ENCODE measurements at regions of chr3 and their contacts with region 1.

Region 1: DNA sequence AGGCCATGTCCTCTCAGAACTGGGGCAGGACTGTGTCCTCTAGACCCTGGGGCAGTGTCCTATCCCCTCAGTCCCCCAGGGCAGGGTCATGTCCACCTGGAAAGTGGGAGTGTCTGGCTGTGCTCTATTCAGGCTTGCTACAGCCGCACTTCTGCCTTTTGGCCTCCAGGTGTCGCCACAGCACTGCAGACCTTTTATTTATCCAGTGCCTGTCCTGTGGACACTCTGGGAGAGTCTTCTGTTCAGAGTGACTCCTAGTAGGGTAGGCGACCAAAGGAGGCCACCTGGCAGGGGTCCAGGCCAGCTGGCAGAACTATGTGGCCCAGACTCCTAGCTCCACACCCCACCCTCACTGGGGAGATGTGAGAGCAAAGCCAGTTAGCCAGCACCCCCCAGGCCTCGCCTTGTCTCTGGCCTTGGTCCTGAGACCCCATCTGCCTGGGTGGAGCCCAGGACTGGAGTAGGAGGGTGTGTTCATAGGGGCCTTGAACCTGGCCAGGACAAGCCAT is 3.9 kb downstream of the TMIE start:
- DNase-seq: peak; percentile 53
- H3K4me3 Mint-ChIP-seq: no peak overlapping the region
- H3K27ac Mint-ChIP-seq: no peak overlapping the region
- H3K4me1 Mint-ChIP-seq: peaks cover 4% of the 10 kb centered on the region
- H3K27me3 Mint-ChIP-seq: peaks cover 15% of the 10 kb centered on the region

Region 2: GRCh38 chr3:46866720-46867549 is 161.9 kb after region 1 on chr3:
- intact Hi-C with region 1: loop called (anchors 1 kb)
- DNase-seq: peak; percentile 56
- H3K4me3 Mint-ChIP-seq: no peak overlapping the region
- H3K27ac Mint-ChIP-seq: no peak overlapping the region
- H3K4me1 Mint-ChIP-seq: no peaks in the 10 kb centered on the region
- H3K27me3 Mint-ChIP-seq: peaks cover 7% of the 10 kb centered on the region

Region 3: DNA sequence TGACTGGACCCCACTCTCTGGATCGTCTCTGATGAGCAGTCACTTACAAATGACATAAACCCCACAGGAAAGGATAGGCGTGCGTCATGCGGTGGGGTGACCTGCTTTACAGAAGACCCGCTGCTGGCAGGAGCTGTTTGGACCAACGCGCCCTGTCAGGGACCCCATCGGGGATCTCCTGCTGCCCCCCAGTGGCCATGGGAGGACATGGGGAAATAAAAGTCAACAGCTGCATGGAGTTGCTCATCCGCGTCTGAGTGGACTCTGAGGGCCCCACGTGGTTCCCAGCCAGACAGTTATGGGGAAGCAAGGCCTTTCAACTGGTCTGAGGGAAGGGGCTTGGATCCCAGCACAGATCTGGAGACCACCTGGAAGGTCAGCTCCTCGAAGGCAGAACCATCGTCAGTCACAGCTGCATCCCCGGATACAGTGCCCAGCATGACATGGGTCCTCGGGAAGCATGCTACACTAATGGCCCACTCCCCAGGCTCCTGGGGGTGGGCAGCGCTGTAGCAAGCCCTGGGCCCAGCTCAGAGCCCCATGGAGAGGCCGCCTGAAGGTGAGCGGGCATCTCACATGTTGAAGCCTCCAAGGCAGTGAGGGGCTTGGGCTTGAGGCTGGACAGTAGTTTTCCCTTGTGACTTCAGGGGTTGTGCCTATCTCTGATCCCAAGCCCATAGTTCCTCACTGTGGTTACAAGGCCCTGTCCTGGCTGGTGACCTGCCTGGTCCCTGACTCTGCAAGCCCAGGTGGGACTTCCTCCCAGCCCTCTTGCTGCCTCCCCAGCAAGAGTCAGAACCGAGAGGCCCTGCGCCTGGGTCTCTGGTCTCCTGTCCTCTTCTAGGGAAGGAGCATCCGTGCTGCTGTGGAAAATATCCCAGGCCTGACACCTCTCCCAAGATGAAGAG is 204.7 kb after region 1 on chr3:
- intact Hi-C with region 1: loop called (anchors 1 kb)
- DNase-seq: peak; percentile 61
- H3K4me3 Mint-ChIP-seq: no peak overlapping the region
- H3K27ac Mint-ChIP-seq: no peak overlapping the region
- H3K4me1 Mint-ChIP-seq: peaks cover 15% of the 10 kb centered on the region
- H3K27me3 Mint-ChIP-seq: no peaks in the 10 kb centered on the region

Region 4: GRCh38 chr3:47324278-47324865 is 619.3 kb after region 1 on chr3:
- intact Hi-C with region 1: loop called (anchors 2 kb)
- DNase-seq: peak; percentile 23
- H3K4me3 Mint-ChIP-seq: no peak overlapping the region
- H3K27ac Mint-ChIP-seq: no peak overlapping the region
- H3K4me1 Mint-ChIP-seq: no peaks in the 10 kb centered on the region
- H3K27me3 Mint-ChIP-seq: no peaks in the 10 kb centered on the region

Region 5: GRCh38 chr3:47420511-47421484 is 715.7 kb after region 1 on chr3:
- intact Hi-C with region 1: loop called (anchors 1 kb)
- DNase-seq: peak; percentile 83
- H3K4me3 Mint-ChIP-seq: peak overlapping the region; percentile 43
- H3K27ac Mint-ChIP-seq: peak overlapping the region; percentile 98
- H3K4me1 Mint-ChIP-seq: peaks cover 22% of the 10 kb centered on the region
- H3K27me3 Mint-ChIP-seq: no peaks in the 10 kb centered on the region

Measured in activated T-helper 1 cell treated with anti-CD3 and anti-CD28 coated beads, Interleukin-12 subunit alpha, Interleukin-12 subunit beta, Interleukin-2, Interleukin-4 antibody, amounts not matched to agents 30 ng/mL and 10 ng/mL and 1 ng/mL, durations not matched to agents 14 hours and 24 hours and 36 hours (primary cell).